ENCODE measurements at regions of chr6 and their contacts with region 1.

Region 1: DNA sequence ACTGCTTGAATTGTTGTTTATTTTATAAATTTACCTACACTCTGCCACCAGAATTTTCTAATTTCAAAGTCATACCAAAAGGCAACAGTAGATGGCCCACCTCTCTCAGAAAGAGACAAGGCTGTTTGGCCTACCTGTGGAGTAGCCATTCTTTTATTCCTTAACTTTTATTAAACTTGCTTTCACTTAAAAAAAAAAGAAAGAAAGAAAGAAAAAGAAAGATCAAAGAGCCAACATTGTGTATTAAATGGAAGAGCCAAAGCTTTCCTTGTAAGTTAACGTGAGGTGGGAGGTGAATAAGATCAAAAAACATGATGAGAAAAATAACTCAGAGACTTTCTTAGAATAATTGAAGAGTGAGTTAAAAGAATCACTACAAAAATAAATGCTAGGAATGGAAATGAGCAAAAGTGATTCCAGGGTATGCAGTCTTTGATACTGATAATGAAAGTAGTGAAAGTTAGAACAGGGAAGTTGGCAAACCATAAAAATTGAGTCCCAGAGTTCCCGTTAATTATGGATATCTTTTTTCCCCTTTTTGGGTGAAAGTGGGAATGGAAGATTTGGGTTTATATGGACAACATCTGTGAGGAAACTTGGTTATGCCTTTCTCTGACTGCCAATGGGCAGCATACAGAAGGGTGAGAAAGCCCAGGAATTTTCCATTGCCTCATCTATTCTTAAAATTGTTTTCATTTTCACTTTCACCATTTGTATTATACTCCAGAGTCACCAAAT is 35.9 kb upstream of the MYB start:
- DNase-seq: peak in 2 of 7 donors; percentile 6 to 11
- H3K4me3 ChIP-seq: no peak overlapping the region
- H3K27ac ChIP-seq: no peak overlapping the region
- H3K4me1 ChIP-seq: no peaks in the 10 kb centered on the region
- H3K27me3 ChIP-seq: no peaks in the 10 kb centered on the region
- CTCF ChIP-seq: peak; percentile 33 to 75 (median 60)
- POLR2A ChIP-seq: no peak

Region 2: DNA sequence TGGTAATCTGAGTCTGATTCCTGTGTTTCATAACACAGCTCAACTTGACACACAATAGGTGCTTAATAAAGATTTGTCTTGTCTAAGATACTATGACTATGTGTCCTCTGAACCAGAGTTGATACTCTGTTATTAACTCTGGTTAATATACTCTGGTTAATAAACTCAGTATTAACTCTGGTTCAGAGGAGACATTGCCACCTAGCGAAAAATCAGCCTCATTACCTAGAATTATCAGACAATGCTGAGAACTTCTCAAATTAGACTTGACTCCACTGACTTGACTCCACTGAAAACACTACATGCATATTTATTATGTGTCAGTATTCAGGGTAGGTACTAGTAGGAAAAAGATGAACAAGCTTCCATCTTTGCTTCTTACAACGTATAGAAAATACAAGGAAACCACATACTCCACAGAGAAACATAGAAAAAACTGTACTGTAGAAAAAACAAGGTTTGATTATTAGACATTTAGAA is 278.5 kb after region 1 on chr6:
- intact Hi-C with region 1: loop called in 1 of 2 experiments (anchors 10 kb)
- DNase-seq: peak in 3 of 7 donors; percentile 11 to 22 (median 19)
- H3K4me3 ChIP-seq: no peak overlapping the region
- H3K27ac ChIP-seq: no peak overlapping the region
- H3K4me1 ChIP-seq: no peaks in the 10 kb centered on the region
- H3K27me3 ChIP-seq: no peaks in the 10 kb centered on the region
- CTCF ChIP-seq: peak; percentile 42 to 77 (median 70)
- POLR2A ChIP-seq: no peak

Measured in adrenal gland (tissue), 19 donors.